ENCODE measurements at regions of chr16 and their contacts with region 1.

Region 1: DNA sequence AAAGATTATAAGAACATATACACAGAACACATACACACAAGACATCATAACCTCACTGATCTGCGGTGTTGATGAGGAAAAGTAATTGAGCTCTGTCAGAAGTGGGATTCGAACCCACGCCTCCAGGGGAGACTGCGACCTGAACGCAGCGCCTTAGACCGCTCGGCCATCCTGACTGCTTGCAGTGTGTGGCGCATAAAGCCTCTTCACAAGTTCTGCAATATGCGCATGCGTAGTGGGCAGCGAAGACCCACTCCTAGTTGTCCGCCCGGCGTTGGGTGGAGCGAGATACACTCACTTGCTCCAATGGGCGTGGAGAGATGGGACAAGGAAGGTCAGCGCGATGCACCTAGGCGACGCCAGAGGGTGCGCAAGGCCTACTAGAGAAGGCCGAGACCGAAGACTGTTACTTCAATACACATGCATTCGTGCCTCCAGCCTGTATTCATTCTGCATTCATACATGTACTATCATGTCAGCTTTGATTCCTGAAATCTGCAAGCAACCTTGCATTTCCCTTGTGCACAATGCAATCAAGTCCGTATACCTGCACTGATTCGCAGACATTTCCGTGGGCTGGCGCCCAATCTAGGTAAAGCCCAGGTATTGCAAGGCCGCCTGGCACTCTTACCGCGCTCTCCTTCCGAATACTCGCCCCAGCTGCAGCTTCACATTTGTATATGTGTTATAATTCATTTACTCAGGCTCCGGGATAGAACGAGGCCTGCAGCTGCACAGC is 16.1 kb upstream of the PLLP start:
- DNase-seq: peak; percentile 99
- ATAC-seq: peak; percentile 95

Region 2: GRCh38 chr16:57277586-57277985 is 23.0 kb before region 1 on chr16:
- intact Hi-C with region 1: no loop called
- DNase-seq: no peak
- ATAC-seq: no peak

Region 3: GRCh38 chr16:57416122-57416509 is 115.6 kb after region 1 on chr16:
- intact Hi-C with region 1: loop called (anchors 5 kb)
- DNase-seq: peak; percentile 65
- ATAC-seq: peak; percentile 11

Measured in sciatic nerve (tissue), 2 donors.